Right lobe of liver (tissue), 6 donors: ENCODE measurements at regions of chr19 and their contacts with region 1.

Region 1: GRCh38 chr19:15563325-15563794 is 51.7 kb upstream of the CYP4F8 start:
- DNase-seq: peak; percentile 65 to 75 (median 73)
- ATAC-seq: peak; percentile 84 to 95 (median 90)
- H3K4me3 ChIP-seq: no peak overlapping the region
- H3K27ac ChIP-seq: no peak overlapping the region
- H3K4me1 ChIP-seq: peaks cover 0 to 5% (median 0%) of the 10 kb centered on the region in 4 donors
- H3K27me3 ChIP-seq: no peaks in the 10 kb centered on the region
- CTCF ChIP-seq: no peak
- POLR2A ChIP-seq: no peak

Region 2: DNA sequence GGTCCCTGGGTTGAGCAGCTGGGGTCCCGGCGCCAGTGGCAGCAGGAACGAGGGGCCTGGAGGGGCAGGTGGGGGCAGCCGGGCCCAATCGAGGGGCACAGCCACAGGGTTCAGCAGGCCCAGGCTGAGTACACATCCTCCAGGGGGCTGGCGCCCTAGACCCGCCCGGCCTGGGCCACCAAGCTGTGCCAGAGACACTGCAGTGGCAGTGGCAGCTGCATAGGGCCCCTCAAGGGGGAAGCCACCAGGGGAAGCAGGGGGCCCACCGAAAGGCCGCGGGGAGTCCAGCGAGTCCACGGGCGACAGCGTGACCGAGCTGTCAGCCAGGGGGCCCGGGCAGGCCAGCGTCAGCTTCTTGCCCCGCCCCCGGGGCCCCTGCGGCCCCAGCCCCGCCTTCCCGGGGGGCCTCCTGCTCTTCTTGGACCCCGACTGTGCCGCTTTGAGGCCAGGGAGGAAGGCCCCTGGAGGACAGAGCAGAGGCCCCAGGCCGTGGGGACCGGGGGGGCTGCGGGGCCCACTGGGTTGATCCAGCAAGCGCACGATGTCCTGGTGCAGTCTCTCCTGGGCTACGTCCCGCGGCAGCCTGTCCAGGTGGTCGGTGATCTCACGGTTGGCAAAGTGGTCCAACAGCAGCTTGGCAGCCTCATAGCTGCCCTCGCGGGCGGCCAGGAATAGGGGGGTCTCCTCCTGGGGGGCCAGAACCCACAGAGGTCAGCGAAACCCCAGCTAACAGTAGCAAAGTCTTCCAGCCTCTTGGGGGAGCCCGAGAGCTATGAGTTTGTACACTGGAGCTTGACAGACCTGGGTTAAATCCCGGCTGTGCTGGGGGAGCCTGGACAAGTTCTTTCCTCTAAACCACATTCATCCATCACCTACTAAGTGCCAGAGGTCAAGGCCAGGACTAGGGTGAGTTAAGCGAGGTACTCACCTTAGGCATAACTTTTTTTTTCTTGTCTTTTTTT is 402.1 kb before region 1 on chr19:
- intact Hi-C with region 1: loop called in 1 of 2 experiments (anchors 10 kb)
- DNase-seq: no peak
- ATAC-seq: peak; percentile 51 to 70 (median 60)
- H3K4me3 ChIP-seq: no peak overlapping the region
- H3K27ac ChIP-seq: no peak overlapping the region
- H3K4me1 ChIP-seq: no peaks in the 10 kb centered on the region
- H3K27me3 ChIP-seq: no peaks in the 10 kb centered on the region
- CTCF ChIP-seq: peak; percentile 25 to 45 (median 44)
- POLR2A ChIP-seq: no peak